CD14-positive monocyte (primary cell): ENCODE measurements at regions of chr2 and their contacts with region 1.

Region 1: DNA sequence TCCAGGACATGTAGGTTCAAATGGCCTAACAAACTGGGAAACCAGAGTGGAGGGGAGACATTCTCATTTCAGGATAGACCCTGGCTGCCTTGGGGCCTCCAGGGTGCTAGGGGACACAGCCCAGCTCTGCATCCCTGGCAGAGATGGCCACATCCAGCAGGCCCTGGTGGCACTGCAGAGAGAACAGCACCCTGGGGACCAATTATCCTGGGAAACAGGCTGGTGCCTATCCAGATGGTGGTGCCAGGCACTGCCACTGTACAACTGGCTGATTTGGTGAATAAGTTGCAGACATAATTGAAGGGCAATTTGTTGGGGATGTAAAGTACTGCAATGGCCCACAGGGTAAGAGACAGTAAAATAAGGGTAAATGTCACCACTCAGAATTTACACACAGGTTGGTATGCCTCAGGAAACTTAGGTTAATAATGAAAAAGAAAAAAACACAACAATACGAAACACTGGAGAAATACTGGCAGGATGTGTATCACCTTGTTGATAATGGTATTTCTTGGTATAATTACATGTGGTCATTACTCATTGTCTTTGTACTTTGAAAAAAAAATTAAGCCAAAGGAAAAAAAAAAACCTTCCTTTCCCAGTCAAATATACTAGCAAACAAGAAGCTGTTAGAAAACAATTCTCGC is 12.8 kb upstream of the SFTPB start:
- DNase-seq: no peak
- H3K4me3 ChIP-seq: no peak overlapping the region
- H3K4me3 Mint-ChIP-seq: no peak overlapping the region
- H3K27ac ChIP-seq: peak overlapping the region in 1 of 2 donors; percentile 10
- H3K27ac Mint-ChIP-seq: peak overlapping the region in 4 of 7 donors; percentile 18 to 38 (median 28)
- H3K4me1 ChIP-seq: peaks cover 45 to 53% of the 10 kb centered on the region in 2 donors
- H3K4me1 Mint-ChIP-seq: peaks cover 51% of the 10 kb centered on the region
- H3K27me3 ChIP-seq: no peaks in the 10 kb centered on the region
- H3K27me3 Mint-ChIP-seq: peaks cover 0 to under 1% (median 0%) of the 10 kb centered on the region in 3 donors
- CTCF ChIP-seq: no peak

Region 2: DNA sequence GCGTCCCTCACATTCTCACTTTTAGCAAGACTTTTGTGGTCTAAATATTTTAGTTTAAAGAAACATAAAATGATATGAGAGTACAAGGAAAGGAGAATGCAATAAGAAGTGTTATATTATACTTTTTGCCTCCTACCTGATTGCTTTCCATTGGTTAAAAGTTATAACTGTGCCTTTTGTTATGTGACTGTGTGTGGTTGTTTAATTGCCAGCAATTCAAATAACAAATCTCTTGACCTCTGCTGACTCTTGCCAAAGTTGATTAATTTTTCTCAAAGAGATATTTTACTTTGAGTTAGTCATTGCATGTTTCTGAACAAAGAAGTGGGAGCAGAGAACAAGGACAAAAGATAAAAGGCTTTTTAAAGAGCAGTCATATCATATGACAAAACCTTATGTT is 1821.3 kb before region 1 on chr2:
- intact Hi-C with region 1: no loop called
- DNase-seq: no peak
- H3K4me3 ChIP-seq: no peak overlapping the region
- H3K4me3 Mint-ChIP-seq: no peak overlapping the region
- H3K27ac ChIP-seq: no peak overlapping the region
- H3K27ac Mint-ChIP-seq: no peak overlapping the region
- H3K4me1 ChIP-seq: no peaks in the 10 kb centered on the region
- H3K4me1 Mint-ChIP-seq: no peaks in the 10 kb centered on the region
- H3K27me3 ChIP-seq: no peaks in the 10 kb centered on the region
- H3K27me3 Mint-ChIP-seq: no peaks in the 10 kb centered on the region
- CTCF ChIP-seq: no peak

Region 3: DNA sequence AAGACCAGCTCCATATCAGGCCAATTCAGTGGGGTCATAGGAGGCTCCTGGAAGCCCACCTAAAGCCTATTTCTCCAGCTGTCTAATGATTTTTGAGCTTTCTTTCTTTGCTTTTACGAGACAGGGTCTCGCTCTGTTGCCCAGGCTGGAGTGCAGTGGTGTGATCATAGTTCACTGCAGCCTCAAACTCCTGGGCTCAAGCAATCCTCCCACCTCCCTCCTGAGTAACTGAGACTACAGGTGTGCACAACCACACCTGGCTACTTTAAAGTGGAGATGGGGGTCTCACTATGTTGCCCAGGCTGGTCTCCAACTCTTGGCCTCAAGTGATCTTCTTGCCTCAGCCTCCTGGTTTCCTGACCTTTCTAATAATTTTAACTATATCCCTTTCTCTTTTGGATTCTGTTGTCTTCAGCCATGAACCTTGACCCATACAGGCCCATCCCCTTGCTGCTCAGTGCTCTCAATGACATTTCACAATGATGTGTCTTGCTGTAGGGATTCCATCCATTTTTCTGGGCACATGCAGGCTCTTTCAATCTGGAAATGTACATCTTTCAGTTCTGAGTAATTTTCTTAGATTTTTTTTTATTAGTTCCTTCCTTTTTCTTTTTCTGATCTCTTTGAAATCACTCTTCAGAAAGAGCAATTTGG is 43.0 kb after region 1 on chr2:
- intact Hi-C with region 1: loop called in 1 of 2 experiments (anchors 5 kb)
- DNase-seq: no peak
- H3K4me3 ChIP-seq: no peak overlapping the region
- H3K4me3 Mint-ChIP-seq: no peak overlapping the region
- H3K27ac ChIP-seq: peak overlapping the region; percentile 12 to 14
- H3K27ac Mint-ChIP-seq: peak overlapping the region; percentile 21 to 81 (median 55)
- H3K4me1 ChIP-seq: peaks cover 47 to 60% of the 10 kb centered on the region in 2 donors
- H3K4me1 Mint-ChIP-seq: peaks cover 56% of the 10 kb centered on the region
- H3K27me3 ChIP-seq: no peaks in the 10 kb centered on the region
- H3K27me3 Mint-ChIP-seq: peaks cover 0 to 1% (median 0%) of the 10 kb centered on the region in 3 donors
- CTCF ChIP-seq: no peak